K562 (cell line): ENCODE measurements at regions of chr9 and their contacts with region 1.

Region 1: DNA sequence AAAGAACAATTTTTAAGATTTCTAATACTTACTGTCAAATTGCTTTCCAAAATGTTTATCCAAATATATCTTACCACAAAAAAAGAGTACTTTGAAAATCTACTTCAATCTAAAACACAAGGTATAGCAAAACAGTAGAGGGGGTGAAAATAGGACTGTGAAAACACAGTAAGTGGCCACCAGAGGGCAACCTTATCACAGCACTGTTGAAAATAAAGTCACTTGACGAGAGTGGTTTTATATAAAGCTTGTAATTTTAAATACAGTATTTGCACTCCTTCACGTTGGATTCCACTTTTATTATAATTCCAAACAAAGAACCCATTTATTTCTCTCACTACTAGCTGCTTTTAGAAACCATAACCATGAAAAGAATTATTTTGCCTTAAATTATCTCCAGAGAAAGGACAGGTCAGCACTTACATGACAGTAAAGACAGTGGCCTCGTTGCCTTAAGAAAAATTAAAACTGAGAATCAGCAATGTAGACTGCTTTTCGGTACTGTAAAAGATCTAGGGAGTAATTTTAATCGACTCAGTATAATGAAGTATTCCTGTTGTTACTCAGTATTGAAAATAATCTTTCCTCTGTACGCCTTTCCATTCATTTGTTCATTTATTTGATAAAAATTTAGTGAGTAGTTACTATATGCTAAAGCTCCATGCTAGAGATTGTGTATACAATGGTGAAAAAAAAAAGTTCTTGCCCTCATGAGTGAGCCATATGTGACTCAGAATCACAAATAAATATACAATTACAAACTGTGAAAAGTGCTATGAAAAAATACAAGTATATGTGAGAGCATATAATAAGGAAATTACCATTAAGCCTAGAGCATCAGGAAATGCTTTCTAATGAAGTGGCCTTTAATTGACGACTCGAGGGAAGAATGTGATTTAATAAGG is 40.0 kb upstream of the CDK5RAP2 start:
- DNase-seq: peak; percentile 69 to 78 (median 69)
- ATAC-seq: peak; percentile 95
- H3K4me3 ChIP-seq: no peak overlapping the region
- H3K27ac ChIP-seq: no peak overlapping the region
- H3K4me1 ChIP-seq: no peaks in the 10 kb centered on the region
- H3K27me3 ChIP-seq: no peaks in the 10 kb centered on the region
- CTCF ChIP-seq: peak; percentile 75 to 87 (median 81)
- EP300 ChIP-seq: no peak
- POLR2A ChIP-seq: no peak
- RAD21 ChIP-seq: peak; percentile 71 to 81

Region 2: DNA sequence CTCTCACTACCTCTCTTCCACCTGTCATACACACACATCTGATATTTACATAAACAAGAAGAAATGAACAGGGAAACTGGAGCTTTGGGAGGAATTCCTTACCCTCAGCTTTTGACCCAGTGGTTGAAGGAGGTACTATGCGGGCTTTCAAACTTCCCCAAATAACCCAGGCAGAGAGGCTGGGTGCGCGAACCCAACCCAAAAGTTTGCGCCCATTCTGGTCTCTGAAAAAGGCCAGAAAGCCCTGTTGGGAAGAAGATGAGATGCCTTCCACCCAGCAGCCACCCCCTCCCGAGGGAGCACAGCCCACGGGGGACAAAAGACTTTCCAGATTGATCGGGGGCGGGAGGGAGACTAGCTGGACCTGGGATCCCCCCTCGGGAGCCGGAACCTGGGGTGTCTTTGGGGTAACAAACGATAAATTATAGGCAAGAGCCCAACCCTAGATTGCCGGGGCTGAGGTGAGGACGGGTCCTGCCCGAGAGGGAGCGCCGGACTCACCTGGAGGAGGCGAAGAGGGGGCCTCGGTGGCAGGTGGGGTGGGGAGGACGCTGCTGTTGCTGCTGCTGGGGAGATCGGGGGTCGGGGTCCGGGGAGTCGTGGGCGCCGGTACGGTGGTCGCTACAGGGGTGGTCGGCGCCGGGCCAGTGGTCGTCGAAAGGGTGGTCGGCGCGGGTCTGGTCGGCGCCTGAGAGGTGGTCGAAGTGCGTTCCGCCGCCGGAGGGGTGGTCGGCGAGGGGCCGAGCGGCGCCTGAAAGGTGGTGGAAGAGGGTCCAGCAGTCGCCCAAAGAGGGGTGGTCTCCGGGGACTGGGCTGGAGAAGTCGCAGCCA is 93.5 kb after region 1 on chr9:
- CTCF ChIA-PET with region 1: no interaction called
- POLR2A ChIA-PET with region 1: interaction called, 4 read pairs
- in situ Hi-C with region 1: no loop called
- intact Hi-C with region 1: loop called (anchors 2 kb)
- DNase-seq: peak; percentile 28 to 35 (median 32)
- ATAC-seq: peak; percentile 1; the same call in 1 of the 3 replicates
- H3K4me3 ChIP-seq: peak overlapping the region; percentile 75
- H3K27ac ChIP-seq: peak overlapping the region; percentile 57
- H3K4me1 ChIP-seq: peaks cover 19 to 29% of the 10 kb centered on the region in 2 experiments; a peak in 4 of 5 replicates
- H3K27me3 ChIP-seq: no peaks in the 10 kb centered on the region
- CTCF ChIP-seq: no peak
- EP300 ChIP-seq: no peak
- POLR2A ChIP-seq: no peak
- RAD21 ChIP-seq: no peak

Region 3: GRCh38 chr9:120936011-120936763 is 316.2 kb after region 1 on chr9:
- CTCF ChIA-PET with region 1: no interaction called
- POLR2A ChIA-PET with region 1: no interaction called
- in situ Hi-C with region 1: loop called (anchors 25 kb)
- intact Hi-C with region 1: loop called (anchors 10 kb)
- DNase-seq: peak; percentile 85 to 92 (median 90)
- ATAC-seq: peak; percentile 96
- H3K4me3 ChIP-seq: no peak overlapping the region
- H3K27ac ChIP-seq: no peak overlapping the region
- H3K4me1 ChIP-seq: peaks cover 13 to 40% of the 10 kb centered on the region in 2 experiments
- H3K27me3 ChIP-seq: peaks cover 2 to 7% of the 10 kb centered on the region in 2 experiments; a peak in 3 of 5 replicates
- CTCF ChIP-seq: peak; percentile 91 to 96 (median 92)
- EP300 ChIP-seq: no peak
- POLR2A ChIP-seq: no peak
- RAD21 ChIP-seq: peak; percentile 89 to 96